AG04450 (cell line): ENCODE measurements at regions of chr14 and their contacts with region 1.

Region 1: DNA sequence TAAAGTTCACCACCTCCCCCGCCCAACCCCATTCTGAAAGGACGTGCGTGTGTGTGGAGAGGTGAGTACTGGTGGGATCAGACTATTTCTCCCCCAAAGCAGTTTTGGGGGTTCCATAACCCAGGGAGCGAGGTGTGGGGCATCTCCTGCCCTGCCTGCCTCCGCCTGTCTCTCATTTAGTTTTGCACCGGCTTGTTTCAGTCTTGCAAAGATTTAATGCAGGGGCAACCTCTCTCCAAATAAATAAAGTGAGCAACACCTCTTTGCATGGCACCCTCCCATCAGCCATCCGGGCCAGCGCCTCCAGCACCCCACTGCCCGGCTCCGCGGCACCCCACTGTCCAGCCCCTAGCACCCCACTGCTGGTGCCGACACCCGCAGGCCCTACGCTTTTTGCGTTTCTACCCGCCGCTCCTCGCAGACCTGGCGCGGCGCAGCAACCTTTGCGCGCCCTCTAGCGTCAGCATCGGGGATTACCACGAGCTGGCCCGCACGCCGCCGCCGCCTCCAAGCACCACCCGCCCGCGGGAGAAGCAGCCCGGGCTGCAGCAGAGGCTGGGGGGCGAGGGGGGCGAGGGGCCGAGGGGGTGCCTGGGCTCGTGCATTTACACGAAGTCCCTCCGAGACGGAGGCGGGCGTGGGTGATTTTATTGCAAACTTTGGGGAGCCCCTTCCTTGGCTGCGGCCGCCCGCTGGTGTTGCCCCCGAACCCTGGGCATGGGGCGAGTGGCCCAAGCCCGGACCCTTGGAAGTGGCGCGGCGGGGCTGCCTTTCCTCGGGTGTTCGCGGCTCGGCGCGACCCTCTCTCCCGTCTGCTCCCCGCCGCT is 55.8 kb upstream of the VRK1 start:
- DNase-seq: no peak
- H3K4me3 ChIP-seq: peak overlapping the region; percentile 66
- H3K27ac ChIP-seq: no peak overlapping the region
- H3K27me3 ChIP-seq: peaks cover 35% of the 10 kb centered on the region
- CTCF ChIP-seq: peak; percentile 82

Region 2: DNA sequence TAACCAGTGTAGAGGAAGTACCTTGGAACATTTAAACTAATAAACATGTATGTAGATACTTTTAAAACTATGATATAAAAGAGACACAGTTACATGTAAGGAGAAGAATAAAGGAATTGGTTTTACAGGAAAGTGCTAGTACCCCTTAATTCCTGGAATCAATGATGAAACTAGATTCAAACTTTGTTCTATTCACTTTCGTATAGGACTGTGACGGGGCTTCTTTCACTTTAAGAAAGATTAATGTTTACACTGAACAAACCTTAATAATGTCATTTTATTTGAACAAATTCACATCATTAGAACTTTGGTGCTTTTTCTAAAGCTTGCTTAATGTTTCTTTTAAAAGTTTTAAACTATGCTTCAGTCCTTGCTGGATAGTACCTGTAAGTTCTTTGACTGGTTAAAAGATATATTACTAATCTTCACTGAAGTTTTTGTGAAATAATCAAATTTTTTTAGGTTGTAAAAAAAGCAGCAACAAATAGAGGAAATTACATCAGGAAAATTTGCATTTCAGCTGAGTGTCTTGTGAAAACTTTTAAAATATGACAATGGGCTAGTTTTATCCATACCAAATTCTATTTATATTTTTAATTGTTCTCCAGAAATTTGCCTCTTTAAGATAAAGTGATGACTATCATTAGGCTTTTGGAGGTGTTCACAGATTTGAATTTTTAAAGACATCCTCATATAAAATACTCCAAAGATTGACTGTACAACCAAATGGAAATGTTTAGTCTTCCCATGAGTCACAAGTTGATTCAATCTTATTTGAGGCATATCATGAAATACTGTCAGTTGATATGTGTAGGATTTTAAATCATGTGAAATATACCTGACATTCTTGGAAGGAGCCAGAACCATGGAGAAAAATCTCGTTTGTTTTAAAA is 203.0 kb before region 1 on chr14:
- CTCF ChIA-PET with region 1: no interaction called
- POLR2A ChIA-PET with region 1: no interaction called
- DNase-seq: no peak
- H3K4me3 ChIP-seq: no peak overlapping the region
- H3K27ac ChIP-seq: no peak overlapping the region
- H3K27me3 ChIP-seq: no peaks in the 10 kb centered on the region
- CTCF ChIP-seq: no peak

Region 3: DNA sequence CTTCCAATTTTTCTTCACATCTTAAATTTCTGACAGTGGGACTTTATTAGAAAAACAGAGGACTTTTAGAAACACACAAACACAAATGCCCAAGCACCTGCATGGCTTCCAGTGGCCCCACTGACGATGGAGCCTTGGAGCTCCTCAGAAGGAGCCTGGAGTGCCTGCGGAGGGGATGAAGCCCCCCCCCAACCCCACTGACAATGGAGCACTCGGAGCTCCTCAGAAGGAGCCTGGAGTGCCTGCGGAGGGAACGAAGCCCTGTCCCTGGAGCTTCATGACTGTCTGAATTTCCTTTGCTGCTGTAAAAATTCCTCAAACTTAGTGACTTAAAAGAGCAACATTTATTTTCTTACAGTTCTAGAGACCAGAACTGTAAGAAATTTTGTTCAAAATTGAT is 24.2 kb before region 1 on chr14:
- CTCF ChIA-PET with region 1: no interaction called
- POLR2A ChIA-PET with region 1: no interaction called
- DNase-seq: no peak
- H3K4me3 ChIP-seq: no peak overlapping the region
- H3K27ac ChIP-seq: no peak overlapping the region
- H3K27me3 ChIP-seq: peaks cover 2% of the 10 kb centered on the region
- CTCF ChIP-seq: no peak

Region 4: DNA sequence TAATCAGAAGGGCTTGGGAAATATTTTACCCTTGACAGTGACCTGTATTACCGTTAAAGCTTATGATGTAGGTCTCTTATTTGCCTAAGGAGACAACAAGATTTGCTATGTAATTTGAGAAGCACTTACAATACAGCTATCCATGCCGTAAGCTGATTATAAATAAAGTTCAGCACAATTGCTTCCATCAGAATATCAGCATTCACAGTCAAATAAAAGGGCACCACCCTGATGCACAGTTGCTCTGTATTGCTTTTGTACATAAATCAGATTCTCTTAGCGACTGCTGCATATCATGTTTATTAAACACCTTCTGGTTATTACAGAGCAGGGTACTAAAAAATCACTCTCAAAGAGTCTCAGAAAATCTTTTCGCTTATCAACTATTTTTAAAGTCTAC is 11.5 kb before region 1 on chr14:
- CTCF ChIA-PET with region 1: interaction called, 11 read pairs
- POLR2A ChIA-PET with region 1: no interaction called
- DNase-seq: no peak
- H3K4me3 ChIP-seq: no peak overlapping the region
- H3K27ac ChIP-seq: no peak overlapping the region
- H3K27me3 ChIP-seq: peaks cover 11% of the 10 kb centered on the region
- CTCF ChIP-seq: no peak

Region 5: GRCh38 chr14:96762650-96763049 is 21.3 kb after region 1 on chr14:
- CTCF ChIA-PET with region 1: interaction called, 23 read pairs
- POLR2A ChIA-PET with region 1: no interaction called
- DNase-seq: no peak
- H3K4me3 ChIP-seq: no peak overlapping the region
- H3K27ac ChIP-seq: no peak overlapping the region
- H3K27me3 ChIP-seq: no peaks in the 10 kb centered on the region
- CTCF ChIP-seq: no peak